T-cell (primary cell): ENCODE measurements at regions of chr6 and their contacts with region 1.

Region 1: GRCh38 chr6:154830771-154831170 is 97.6 kb downstream of the SCAF8 start:
- DNase-seq: no peak
- ATAC-seq: no peak
- H3K4me3 ChIP-seq: no peak overlapping the region
- H3K4me3 Mint-ChIP-seq: no peak overlapping the region
- H3K27ac ChIP-seq: no peak overlapping the region
- H3K27ac Mint-ChIP-seq: no peak overlapping the region
- H3K4me1 ChIP-seq: no peaks in the 10 kb centered on the region
- H3K4me1 Mint-ChIP-seq: peaks cover 29 to 37% (median 31%) of the 10 kb centered on the region in 3 donors
- H3K27me3 ChIP-seq: no peaks in the 10 kb centered on the region
- H3K27me3 Mint-ChIP-seq: no peaks in the 10 kb centered on the region

Region 2: GRCh38 chr6:154868143-154868594 is 37.4 kb after region 1 on chr6:
- CTCF ChIA-PET with region 1: interaction called in 1 of 2 experiments, 13 read pairs
- POLR2A ChIA-PET with region 1: no interaction called
- DNase-seq: peak in 1 of 35 experiments; percentile 49
- ATAC-seq: no peak
- H3K4me3 ChIP-seq: no peak overlapping the region
- H3K4me3 Mint-ChIP-seq: no peak overlapping the region
- H3K27ac ChIP-seq: no peak overlapping the region
- H3K27ac Mint-ChIP-seq: no peak overlapping the region
- H3K4me1 ChIP-seq: peaks cover 0 to 2% of the 10 kb centered on the region in 2 experiments
- H3K4me1 Mint-ChIP-seq: peaks cover 0 to 13% (median 8%) of the 10 kb centered on the region in 3 donors
- H3K27me3 ChIP-seq: no peaks in the 10 kb centered on the region
- H3K27me3 Mint-ChIP-seq: no peaks in the 10 kb centered on the region